ENCODE measurements at regions of chr20 and their contacts with region 1.

Region 1: DNA sequence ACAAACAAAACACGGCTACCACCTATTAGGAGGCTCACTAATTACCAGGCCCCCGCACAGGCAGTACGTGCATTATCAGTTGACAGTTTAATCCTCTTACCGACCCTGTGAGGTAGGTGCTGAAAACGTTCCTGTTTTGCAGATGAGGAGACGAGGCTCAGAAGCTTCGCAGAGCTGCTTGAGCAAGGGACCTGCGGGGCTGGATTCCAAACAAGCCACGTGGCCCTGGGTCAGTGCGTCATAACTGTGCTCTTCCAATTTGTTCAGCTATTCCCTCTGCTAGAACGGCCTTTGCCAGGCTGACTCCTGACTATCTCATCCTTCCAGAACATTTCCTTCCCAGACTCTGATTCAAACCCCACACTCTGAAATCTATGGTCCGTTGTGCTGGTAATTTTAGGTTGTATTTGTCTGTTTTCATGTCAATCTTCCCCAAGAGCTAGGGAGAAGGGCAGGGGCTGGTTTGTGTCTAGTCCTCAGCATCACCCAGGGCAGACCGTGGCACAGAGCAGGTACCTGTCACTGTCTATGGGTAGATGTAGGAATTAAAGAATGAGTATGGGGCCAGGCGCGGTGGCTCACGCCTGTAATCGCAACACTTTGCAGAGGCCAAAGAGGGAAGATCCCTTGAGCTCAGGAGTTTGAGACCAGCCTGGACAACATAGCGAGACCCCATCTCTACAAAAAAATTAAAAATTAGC is 28.8 kb upstream of the TLDC2 start:
- DNase-seq: no peak
- CTCF ChIP-seq: no peak

Region 2: DNA sequence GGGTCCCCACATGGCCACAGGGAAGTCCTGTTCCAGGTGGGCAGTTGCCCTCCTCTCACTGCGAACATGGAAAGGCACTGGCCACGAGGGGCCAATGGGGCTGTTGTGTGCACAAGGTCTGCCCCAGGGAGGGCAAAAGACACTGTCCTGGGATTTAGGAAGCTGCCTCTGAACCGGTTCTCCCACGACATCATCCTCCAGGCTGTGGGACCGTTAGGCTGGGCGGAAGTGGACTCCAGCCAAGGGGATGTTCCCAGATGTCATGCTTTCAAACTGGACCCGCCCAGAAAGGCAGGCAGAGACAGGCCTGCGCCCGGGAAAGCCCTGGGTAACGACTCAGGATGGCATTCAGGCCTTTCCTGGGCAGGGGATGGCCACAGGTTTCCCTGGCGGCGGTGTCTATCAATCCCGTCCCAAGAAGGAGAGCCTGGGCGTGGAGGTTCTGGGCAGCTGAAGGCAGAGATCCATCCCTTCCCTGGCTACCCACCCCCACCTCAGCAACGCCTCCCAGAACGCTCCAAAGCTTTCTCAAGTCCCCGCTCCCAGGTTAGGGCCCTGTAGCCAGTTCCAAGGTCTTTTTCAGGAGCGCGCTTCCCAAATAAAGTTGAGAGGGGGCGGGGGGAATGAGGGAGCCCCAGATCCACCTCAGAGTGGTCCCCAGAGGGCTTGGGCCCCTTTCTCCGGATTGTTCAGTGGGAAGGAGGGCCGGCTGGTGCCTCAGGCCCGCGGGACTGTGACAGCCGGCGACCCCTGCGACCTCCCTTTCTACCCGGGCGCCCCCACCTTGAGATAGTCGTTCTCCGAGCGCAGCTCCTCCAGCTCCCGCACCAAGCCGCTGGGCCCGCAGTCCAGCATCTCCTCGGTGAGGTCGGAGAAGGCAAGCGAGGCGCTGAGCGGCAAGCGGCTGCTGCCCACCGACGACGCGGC is 15.0 kb after region 1 on chr20:
- CTCF ChIA-PET with region 1: interaction called, 11 read pairs
- POLR2A ChIA-PET with region 1: no interaction called
- DNase-seq: no peak
- CTCF ChIP-seq: no peak

Measured in GM10248 (cell line).